ENCODE measurements at regions of chr2 and their contacts with region 1.

Region 1: GRCh38 chr2:24382363-24383073 is 22.2 kb upstream of the ITSN2 start:
- DNase-seq: peak; percentile 39
- H3K4me3 Mint-ChIP-seq: no peak overlapping the region
- H3K27ac Mint-ChIP-seq: no peak overlapping the region
- H3K4me1 Mint-ChIP-seq: no peaks in the 10 kb centered on the region
- H3K27me3 Mint-ChIP-seq: no peaks in the 10 kb centered on the region

Region 2: GRCh38 chr2:23220513-23221094 is 1161.9 kb before region 1 on chr2:
- intact Hi-C with region 1: no loop called
- DNase-seq: no peak
- H3K4me3 Mint-ChIP-seq: no peak overlapping the region
- H3K27ac Mint-ChIP-seq: no peak overlapping the region
- H3K4me1 Mint-ChIP-seq: no peaks in the 10 kb centered on the region
- H3K27me3 Mint-ChIP-seq: peaks cover 2% of the 10 kb centered on the region

Region 3: GRCh38 chr2:23824777-23825212 is 557.7 kb before region 1 on chr2:
- intact Hi-C with region 1: loop called (anchors 1 kb)
- DNase-seq: no peak
- H3K4me3 Mint-ChIP-seq: no peak overlapping the region
- H3K27ac Mint-ChIP-seq: no peak overlapping the region
- H3K4me1 Mint-ChIP-seq: no peaks in the 10 kb centered on the region
- H3K27me3 Mint-ChIP-seq: no peaks in the 10 kb centered on the region

Region 4: DNA sequence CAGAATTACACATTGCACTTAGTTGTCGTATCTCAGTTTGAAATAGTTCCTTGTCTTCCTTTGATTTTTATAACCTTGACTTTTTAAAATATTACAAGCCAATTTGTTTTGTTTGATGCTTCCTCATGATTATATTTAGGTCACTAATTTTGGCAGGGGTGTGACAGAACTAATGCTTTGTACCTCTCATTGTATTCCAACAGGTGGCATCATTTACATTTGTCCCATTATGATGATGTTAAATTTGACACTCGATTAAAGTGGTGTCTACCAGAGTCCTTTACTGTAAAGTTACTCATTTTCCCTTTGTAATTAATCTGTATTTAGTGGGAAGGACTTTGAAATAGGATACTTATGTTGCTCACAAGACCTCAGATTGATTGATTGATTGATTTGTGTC is 394.1 kb before region 1 on chr2:
- intact Hi-C with region 1: loop called (anchors 5 kb)
- DNase-seq: no peak
- H3K4me3 Mint-ChIP-seq: no peak overlapping the region
- H3K27ac Mint-ChIP-seq: no peak overlapping the region
- H3K4me1 Mint-ChIP-seq: no peaks in the 10 kb centered on the region
- H3K27me3 Mint-ChIP-seq: no peaks in the 10 kb centered on the region

Region 5: GRCh38 chr2:24228470-24228869 is 154.0 kb before region 1 on chr2:
- intact Hi-C with region 1: loop called (anchors 1 kb)
- DNase-seq: no peak
- H3K4me3 Mint-ChIP-seq: no peak overlapping the region
- H3K27ac Mint-ChIP-seq: no peak overlapping the region
- H3K4me1 Mint-ChIP-seq: no peaks in the 10 kb centered on the region
- H3K27me3 Mint-ChIP-seq: no peaks in the 10 kb centered on the region

Region 6: GRCh38 chr2:24315669-24316068 is 66.8 kb before region 1 on chr2:
- intact Hi-C with region 1: loop called (anchors 5 kb)
- DNase-seq: no peak
- H3K4me3 Mint-ChIP-seq: no peak overlapping the region
- H3K27ac Mint-ChIP-seq: no peak overlapping the region
- H3K4me1 Mint-ChIP-seq: peaks cover 10% of the 10 kb centered on the region
- H3K27me3 Mint-ChIP-seq: no peaks in the 10 kb centered on the region